CD14-positive monocyte (primary cell): ENCODE measurements at regions of chr9 and their contacts with region 1.

Region 1: GRCh38 chr9:91395553-91396471 is 27.8 kb downstream of the NFIL3 start:
- DNase-seq: peak; percentile 68 to 90 (median 87)
- H3K4me3 ChIP-seq: peak overlapping the region in 1 of 3 experiments; percentile 27
- H3K4me3 Mint-ChIP-seq: peak overlapping the region; percentile 62 to 85
- H3K27ac ChIP-seq: peak overlapping the region in 1 of 2 donors; percentile 87
- H3K27ac Mint-ChIP-seq: peak overlapping the region; percentile 89 to 98 (median 96)
- H3K4me1 ChIP-seq: peaks cover 24 to 29% of the 10 kb centered on the region in 2 donors
- H3K4me1 Mint-ChIP-seq: peaks cover 23% of the 10 kb centered on the region
- H3K27me3 ChIP-seq: no peaks in the 10 kb centered on the region
- H3K27me3 Mint-ChIP-seq: peaks cover 0 to 3% (median 0%) of the 10 kb centered on the region in 3 donors
- CTCF ChIP-seq: no peak

Region 2: DNA sequence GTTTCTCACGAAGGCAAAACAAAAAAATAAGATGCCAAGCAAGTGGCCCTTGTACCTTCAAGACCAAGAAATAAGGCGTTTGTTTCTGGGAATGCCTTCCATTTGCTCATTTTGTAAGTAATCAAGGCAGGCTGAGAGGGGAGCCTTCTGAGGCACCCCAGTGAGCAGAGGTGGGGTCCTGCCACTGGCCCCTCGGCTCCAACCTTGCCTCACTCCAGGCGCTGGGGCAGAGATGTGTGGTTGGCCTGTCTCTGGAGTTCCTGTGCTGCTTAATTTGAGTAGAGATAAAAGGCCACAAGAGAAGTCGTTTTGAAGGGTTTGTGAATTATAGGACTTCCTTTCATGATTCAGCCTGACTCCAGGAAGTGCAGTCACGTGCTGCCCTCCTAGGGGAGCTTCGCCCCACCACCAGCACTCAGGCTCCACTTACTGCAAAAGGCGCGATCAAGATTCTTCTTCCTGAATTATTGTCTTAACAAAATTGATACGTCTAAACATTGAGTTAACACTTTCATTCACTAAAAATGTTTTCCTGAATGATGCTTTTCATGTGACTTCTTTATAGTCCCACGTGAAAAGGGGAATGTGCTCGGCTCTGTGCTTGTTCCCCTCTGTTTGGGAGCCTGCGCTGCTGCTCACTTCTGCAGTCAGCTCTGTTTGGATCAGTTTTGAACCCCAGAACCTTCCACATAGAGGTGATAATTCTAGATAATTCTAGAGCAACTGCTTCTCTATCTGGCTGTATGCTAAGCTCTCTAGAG is 580.4 kb before region 1 on chr9:
- intact Hi-C with region 1: no loop called
- DNase-seq: peak; percentile 69 to 86 (median 86)
- H3K4me3 ChIP-seq: peak overlapping the region in 1 of 3 experiments; percentile 48
- H3K4me3 Mint-ChIP-seq: peak overlapping the region; percentile 72 to 80
- H3K27ac ChIP-seq: peak overlapping the region; percentile 84 to 85
- H3K27ac Mint-ChIP-seq: peak overlapping the region; percentile 85 to 98 (median 94)
- H3K4me1 ChIP-seq: peaks cover 58 to 92% of the 10 kb centered on the region in 2 donors
- H3K4me1 Mint-ChIP-seq: peaks cover 79% of the 10 kb centered on the region
- H3K27me3 ChIP-seq: no peaks in the 10 kb centered on the region
- H3K27me3 Mint-ChIP-seq: no peaks in the 10 kb centered on the region
- CTCF ChIP-seq: no peak

Region 3: DNA sequence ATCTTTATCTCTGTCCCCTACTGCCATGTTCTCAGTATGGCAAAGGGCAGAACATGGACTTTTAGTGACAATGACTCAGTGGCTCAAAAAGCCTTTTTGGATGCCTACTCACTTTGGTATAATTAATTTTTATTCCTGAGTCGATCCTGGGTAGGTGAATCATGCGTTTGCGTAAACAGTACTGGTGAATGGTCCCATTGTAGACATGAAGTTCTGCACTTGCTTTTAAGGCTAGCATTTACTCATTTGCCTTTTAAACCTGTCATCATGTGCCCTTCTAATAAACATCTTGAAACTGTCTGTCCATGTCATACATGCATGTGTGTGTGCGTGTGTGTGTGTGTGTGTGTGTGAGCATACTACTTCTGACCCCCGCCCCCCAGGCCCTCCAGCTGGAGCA is 257.1 kb before region 1 on chr9:
- intact Hi-C with region 1: no loop called
- DNase-seq: peak in 1 of 3 donors; percentile 35
- H3K4me3 ChIP-seq: no peak overlapping the region
- H3K4me3 Mint-ChIP-seq: no peak overlapping the region
- H3K27ac ChIP-seq: no peak overlapping the region
- H3K27ac Mint-ChIP-seq: peak overlapping the region in 1 of 7 donors; percentile 30
- H3K4me1 ChIP-seq: no peaks in the 10 kb centered on the region
- H3K4me1 Mint-ChIP-seq: peaks cover 4% of the 10 kb centered on the region
- H3K27me3 ChIP-seq: no peaks in the 10 kb centered on the region
- H3K27me3 Mint-ChIP-seq: no peaks in the 10 kb centered on the region
- CTCF ChIP-seq: no peak

Region 4: GRCh38 chr9:91253488-91253887 is 142.3 kb before region 1 on chr9:
- intact Hi-C with region 1: no loop called
- DNase-seq: peak in 1 of 3 donors; percentile 7
- H3K4me3 ChIP-seq: no peak overlapping the region
- H3K4me3 Mint-ChIP-seq: no peak overlapping the region
- H3K27ac ChIP-seq: no peak overlapping the region
- H3K27ac Mint-ChIP-seq: no peak overlapping the region
- H3K4me1 ChIP-seq: peaks cover 6 to 8% of the 10 kb centered on the region in 2 donors
- H3K4me1 Mint-ChIP-seq: peaks cover 11% of the 10 kb centered on the region
- H3K27me3 ChIP-seq: no peaks in the 10 kb centered on the region
- H3K27me3 Mint-ChIP-seq: no peaks in the 10 kb centered on the region
- CTCF ChIP-seq: no peak

Region 5: GRCh38 chr9:91361291-91362050 is 34.3 kb before region 1 on chr9 and contains the start of gene AUH:
- intact Hi-C with region 1: loop called in 1 of 2 experiments (anchors 5 kb)
- DNase-seq: peak; percentile 66 to 82 (median 78)
- H3K4me3 ChIP-seq: peak within 1 kb of the TSS; percentile 74 to 89 (median 83)
- H3K4me3 Mint-ChIP-seq: peak within 1 kb of the TSS; percentile 99
- H3K27ac ChIP-seq: peak within 1 kb of the TSS in 1 of 2 donors; percentile 77
- H3K27ac Mint-ChIP-seq: peak within 1 kb of the TSS; percentile 78 to 92 (median 89)
- H3K4me1 ChIP-seq: peaks cover 16 to 21% of the 10 kb centered on the region in 2 donors
- H3K4me1 Mint-ChIP-seq: peaks cover 24% of the 10 kb centered on the region
- H3K27me3 ChIP-seq: no peaks in the 10 kb centered on the region
- H3K27me3 Mint-ChIP-seq: peaks cover 0 to 1% (median 0%) of the 10 kb centered on the region in 3 donors
- CTCF ChIP-seq: no peak
- polyA plus RNA-seq, gene AUH: 4.0 to 9.9 (median 8.4) TPM

Region 6: GRCh38 chr9:91374939-91375338 is 20.9 kb before region 1 on chr9:
- intact Hi-C with region 1: loop called in 1 of 2 experiments (anchors 2 kb)
- DNase-seq: peak in 2 of 3 donors; percentile 28 to 31
- H3K4me3 ChIP-seq: no peak overlapping the region
- H3K4me3 Mint-ChIP-seq: no peak overlapping the region
- H3K27ac ChIP-seq: no peak overlapping the region
- H3K27ac Mint-ChIP-seq: peak overlapping the region in 4 of 7 donors; percentile 16 to 70 (median 48)
- H3K4me1 ChIP-seq: peaks cover 12 to 20% of the 10 kb centered on the region in 2 donors
- H3K4me1 Mint-ChIP-seq: peaks cover 24% of the 10 kb centered on the region
- H3K27me3 ChIP-seq: no peaks in the 10 kb centered on the region
- H3K27me3 Mint-ChIP-seq: peaks cover 0 to 2% (median 0%) of the 10 kb centered on the region in 3 donors
- CTCF ChIP-seq: no peak